Prostate gland (tissue), 2 donors: ENCODE measurements at regions of chr2 and their contacts with region 1.

Region 1: GRCh38 chr2:100197631-100198153 is 55.3 kb upstream of the AFF3 start:
- DNase-seq: peak; percentile 72
- H3K4me3 ChIP-seq: no peak overlapping the region
- H3K27ac ChIP-seq: peak overlapping the region; percentile 76 to 83
- H3K4me1 ChIP-seq: peaks cover 15% of the 10 kb centered on the region
- H3K27me3 ChIP-seq: no peaks in the 10 kb centered on the region
- CTCF ChIP-seq: no peak
- POLR2A ChIP-seq: no peak

Region 2: GRCh38 chr2:100104718-100105677 is 92.7 kb before region 1 on chr2:
- intact Hi-C with region 1: loop called (anchors 5 kb)
- DNase-seq: no peak
- H3K4me3 ChIP-seq: peak overlapping the region; percentile 53 to 73
- H3K27ac ChIP-seq: peak overlapping the region; percentile 84 to 95
- H3K4me1 ChIP-seq: peaks cover 6% of the 10 kb centered on the region
- H3K27me3 ChIP-seq: no peaks in the 10 kb centered on the region
- CTCF ChIP-seq: no peak
- POLR2A ChIP-seq: no peak

Region 3: DNA sequence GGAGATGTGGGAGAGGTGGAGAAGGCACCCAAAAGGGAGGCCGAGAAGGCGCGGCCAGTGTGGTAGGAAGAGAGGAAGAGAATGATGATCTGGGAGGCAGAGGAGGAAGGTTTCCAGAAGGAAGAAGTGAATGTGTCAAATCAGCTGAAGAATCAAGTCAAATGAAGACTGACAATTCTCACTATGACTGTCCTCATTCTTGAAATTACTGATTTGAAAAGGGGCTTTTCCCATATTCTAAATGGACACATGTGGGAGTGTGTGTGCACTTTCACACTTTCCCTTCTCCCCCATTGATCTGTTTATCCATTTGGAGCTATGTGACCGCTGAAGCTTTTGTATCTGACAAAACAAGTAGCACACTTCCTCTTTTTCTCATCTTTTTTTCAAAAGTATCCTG is 61.4 kb before region 1 on chr2:
- intact Hi-C with region 1: no loop called
- DNase-seq: no peak
- H3K4me3 ChIP-seq: no peak overlapping the region
- H3K27ac ChIP-seq: no peak overlapping the region
- H3K4me1 ChIP-seq: no peaks in the 10 kb centered on the region
- H3K27me3 ChIP-seq: no peaks in the 10 kb centered on the region
- CTCF ChIP-seq: no peak
- POLR2A ChIP-seq: no peak